Activated CD4-positive, alpha-beta memory T cell treated with anti-CD3 and anti-CD28 coated beads for 36 hours (primary cell): ENCODE measurements at regions of chr15 and their contacts with region 1.

Region 1: DNA sequence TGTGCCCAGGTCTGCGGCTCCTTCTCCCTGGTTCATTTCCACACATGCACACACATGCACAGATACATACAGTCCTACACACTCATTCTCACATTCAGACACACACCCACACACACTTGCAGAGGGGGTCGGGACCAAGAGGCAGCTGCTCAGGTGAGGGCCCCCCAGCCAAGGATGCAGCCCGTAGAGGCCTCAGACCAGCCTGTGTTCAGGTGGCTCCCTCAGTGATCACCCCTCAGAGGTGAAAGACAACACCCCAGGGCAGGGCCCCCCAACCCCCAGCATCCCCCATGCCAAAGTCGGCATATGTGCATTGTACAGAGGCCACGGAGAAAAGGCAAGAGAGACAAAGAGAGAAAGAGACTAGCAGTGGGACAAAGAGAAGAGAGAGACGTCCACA is 5.9 kb upstream of the CORO2B start:
- DNase-seq: no peak
- H3K4me3 Mint-ChIP-seq: no peak overlapping the region
- H3K27ac Mint-ChIP-seq: no peak overlapping the region
- H3K4me1 Mint-ChIP-seq: peaks cover 3% of the 10 kb centered on the region
- H3K27me3 Mint-ChIP-seq: peaks cover 59% of the 10 kb centered on the region

Region 2: GRCh38 chr15:68559345-68560310 is 13.3 kb before region 1 on chr15:
- CTCF ChIA-PET with region 1: interaction called, 16 read pairs
- POLR2A ChIA-PET with region 1: no interaction called
- intact Hi-C with region 1: no loop called
- DNase-seq: peak; percentile 78
- H3K4me3 Mint-ChIP-seq: peak overlapping the region; percentile 48
- H3K27ac Mint-ChIP-seq: no peak overlapping the region
- H3K4me1 Mint-ChIP-seq: peaks cover 14% of the 10 kb centered on the region
- H3K27me3 Mint-ChIP-seq: peaks cover 45% of the 10 kb centered on the region

Region 3: DNA sequence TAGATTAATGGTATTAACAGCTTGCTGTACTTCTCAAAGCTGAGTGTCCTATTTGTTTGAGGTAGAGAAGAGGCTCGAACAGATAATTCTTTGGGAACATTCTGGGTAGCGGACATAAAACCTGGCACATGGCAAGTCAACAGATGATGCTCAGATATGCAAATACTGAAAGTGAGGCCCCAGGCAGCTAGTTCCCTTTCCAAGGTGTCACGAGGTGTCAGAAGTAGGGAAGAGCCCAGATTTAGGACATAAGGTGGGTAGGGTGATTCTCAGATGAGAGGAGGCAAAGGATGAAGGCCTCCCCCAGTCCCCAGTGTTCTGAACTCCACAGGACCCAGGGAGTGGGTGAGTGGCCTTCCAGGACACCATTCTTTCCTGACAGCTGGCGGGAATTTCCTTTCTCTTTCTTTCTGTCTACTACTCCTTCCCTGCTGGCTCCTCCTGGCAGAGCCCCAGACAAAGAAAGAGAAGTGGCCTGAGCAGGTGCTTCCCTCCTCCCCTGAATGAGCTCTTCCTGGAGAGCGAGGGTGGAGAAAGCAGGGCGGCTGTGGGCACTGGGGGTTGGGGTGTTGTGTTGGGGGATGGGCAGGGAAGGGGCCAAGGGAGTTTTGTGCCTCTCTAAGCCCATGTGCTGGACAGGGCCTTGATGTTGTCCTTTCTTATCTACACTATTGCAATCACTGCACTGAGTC is 93.3 kb after region 1 on chr15:
- CTCF ChIA-PET with region 1: no interaction called
- POLR2A ChIA-PET with region 1: no interaction called
- intact Hi-C with region 1: no loop called
- DNase-seq: no peak
- H3K4me3 Mint-ChIP-seq: no peak overlapping the region
- H3K27ac Mint-ChIP-seq: no peak overlapping the region
- H3K4me1 Mint-ChIP-seq: no peaks in the 10 kb centered on the region
- H3K27me3 Mint-ChIP-seq: peaks cover 14% of the 10 kb centered on the region